CD4-positive, alpha-beta T cell (primary cell): ENCODE measurements at regions of chr1 and their contacts with region 1.

Region 1: GRCh38 chr1:234326497-234327366 is 46.5 kb upstream of the COA6 start:
- DNase-seq: peak; percentile 45 to 86 (median 71)
- ATAC-seq: peak; percentile 91
- H3K4me3 ChIP-seq: peak overlapping the region; percentile 73
- H3K4me3 Mint-ChIP-seq: peak overlapping the region; percentile 93
- H3K27ac ChIP-seq: peak overlapping the region; percentile 24 to 72
- H3K27ac Mint-ChIP-seq: peak overlapping the region; percentile 85
- H3K4me1 ChIP-seq: peaks cover 12% of the 10 kb centered on the region
- H3K4me1 Mint-ChIP-seq: peaks cover 25% of the 10 kb centered on the region
- H3K27me3 ChIP-seq: peaks cover 0 to 6% of the 10 kb centered on the region in 2 experiments
- H3K27me3 Mint-ChIP-seq: peaks cover 14% of the 10 kb centered on the region
- CTCF ChIP-seq: peak; percentile 87

Region 2: GRCh38 chr1:234114648-234115307 is 212.0 kb before region 1 on chr1:
- CTCF ChIA-PET with region 1: interaction called, 7 read pairs
- POLR2A ChIA-PET with region 1: no interaction called
- intact Hi-C with region 1: loop called (anchors 2 kb)
- DNase-seq: peak in 8 of 14 experiments; percentile 3 to 69 (median 20)
- ATAC-seq: no peak
- H3K4me3 ChIP-seq: no peak overlapping the region
- H3K4me3 Mint-ChIP-seq: peak overlapping the region; percentile 61
- H3K27ac ChIP-seq: no peak overlapping the region
- H3K27ac Mint-ChIP-seq: no peak overlapping the region
- H3K4me1 ChIP-seq: peaks cover 4% of the 10 kb centered on the region
- H3K4me1 Mint-ChIP-seq: peaks cover 7% of the 10 kb centered on the region
- H3K27me3 ChIP-seq: peaks cover 3 to 10% of the 10 kb centered on the region in 2 experiments
- H3K27me3 Mint-ChIP-seq: peaks cover 24% of the 10 kb centered on the region
- CTCF ChIP-seq: peak; percentile 88

Region 3: DNA sequence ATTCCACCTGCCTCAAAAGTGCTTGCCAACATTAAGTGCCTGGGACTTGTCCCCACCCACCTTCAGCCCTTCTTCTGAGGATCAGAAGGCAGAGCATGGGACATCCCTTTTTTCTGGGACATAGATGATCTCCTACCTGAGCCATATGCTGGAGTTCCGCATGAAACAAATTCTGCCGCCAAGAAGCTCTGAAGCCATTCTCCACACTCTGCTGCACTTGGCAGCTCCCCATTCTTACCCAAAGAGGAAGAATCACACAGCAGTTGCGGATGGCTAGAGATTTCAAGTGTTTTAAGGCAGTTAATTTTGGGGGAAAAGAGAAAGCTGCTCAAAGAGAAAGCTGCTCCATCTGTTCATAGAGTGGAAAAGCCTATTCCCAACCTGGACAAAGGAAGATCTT is 150.7 kb before region 1 on chr1:
- CTCF ChIA-PET with region 1: no interaction called
- POLR2A ChIA-PET with region 1: no interaction called
- intact Hi-C with region 1: no loop called
- DNase-seq: no peak
- ATAC-seq: no peak
- H3K4me3 ChIP-seq: no peak overlapping the region
- H3K4me3 Mint-ChIP-seq: no peak overlapping the region
- H3K27ac ChIP-seq: no peak overlapping the region
- H3K27ac Mint-ChIP-seq: no peak overlapping the region
- H3K4me1 ChIP-seq: peaks cover 5% of the 10 kb centered on the region
- H3K4me1 Mint-ChIP-seq: peaks cover 5% of the 10 kb centered on the region
- H3K27me3 ChIP-seq: no peaks in the 10 kb centered on the region
- H3K27me3 Mint-ChIP-seq: peaks cover 21% of the 10 kb centered on the region
- CTCF ChIP-seq: no peak

Region 4: GRCh38 chr1:234212764-234213657 is 113.7 kb before region 1 on chr1:
- CTCF ChIA-PET with region 1: interaction called, 43 read pairs
- POLR2A ChIA-PET with region 1: no interaction called
- intact Hi-C with region 1: loop called (anchors 1 to 5 kb)
- DNase-seq: peak in 6 of 14 experiments; percentile 12 to 72 (median 37)
- ATAC-seq: peak; percentile 68
- H3K4me3 ChIP-seq: no peak overlapping the region
- H3K4me3 Mint-ChIP-seq: peak overlapping the region; percentile 76
- H3K27ac ChIP-seq: no peak overlapping the region
- H3K27ac Mint-ChIP-seq: peak overlapping the region; percentile 6
- H3K4me1 ChIP-seq: peaks cover 25% of the 10 kb centered on the region
- H3K4me1 Mint-ChIP-seq: peaks cover 20% of the 10 kb centered on the region
- H3K27me3 ChIP-seq: peaks cover 4 to 26% of the 10 kb centered on the region in 2 experiments
- H3K27me3 Mint-ChIP-seq: peaks cover 47% of the 10 kb centered on the region
- CTCF ChIP-seq: peak; percentile 64

Region 5: GRCh38 chr1:234315091-234315541 is 11.6 kb before region 1 on chr1:
- CTCF ChIA-PET with region 1: interaction called, 156 read pairs
- POLR2A ChIA-PET with region 1: interaction called, 9 read pairs
- intact Hi-C with region 1: loop called in 1 of 2 experiments (anchors 1 kb)
- DNase-seq: peak in 8 of 14 experiments; percentile 30 to 85 (median 42)
- ATAC-seq: peak; percentile 89
- H3K4me3 ChIP-seq: no peak overlapping the region
- H3K4me3 Mint-ChIP-seq: peak overlapping the region; percentile 5
- H3K27ac ChIP-seq: peak overlapping the region in 1 of 2 donors; percentile 93
- H3K27ac Mint-ChIP-seq: peak overlapping the region; percentile 92
- H3K4me1 ChIP-seq: peaks cover 60% of the 10 kb centered on the region
- H3K4me1 Mint-ChIP-seq: peaks cover 40% of the 10 kb centered on the region
- H3K27me3 ChIP-seq: no peaks in the 10 kb centered on the region
- H3K27me3 Mint-ChIP-seq: no peaks in the 10 kb centered on the region
- CTCF ChIP-seq: no peak

Region 6: DNA sequence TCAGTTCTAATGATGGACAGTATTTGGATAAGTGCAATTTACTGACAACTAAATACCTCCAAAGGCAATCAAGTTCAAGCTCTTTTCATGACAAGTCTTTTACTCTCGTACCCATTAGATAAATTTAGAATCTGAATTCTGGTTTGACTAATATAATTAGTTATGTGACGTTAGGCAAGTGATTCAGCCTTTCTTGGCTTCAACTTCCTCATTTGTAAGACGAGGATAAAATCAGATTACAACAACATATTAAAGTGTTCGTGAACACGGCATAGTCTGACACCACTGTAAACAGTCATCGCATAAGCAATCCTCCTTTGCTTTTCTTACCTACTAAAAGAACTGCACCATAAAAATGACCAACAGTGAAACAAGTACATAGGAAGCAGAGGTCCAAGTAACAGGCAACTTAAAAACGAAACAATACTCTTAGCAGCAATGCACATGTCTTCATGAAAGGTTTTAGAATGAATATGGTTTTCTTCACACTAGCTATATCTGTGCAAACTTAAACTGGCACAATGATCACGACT is 72.2 kb after region 1 on chr1:
- CTCF ChIA-PET with region 1: no interaction called
- POLR2A ChIA-PET with region 1: no interaction called
- intact Hi-C with region 1: no loop called
- DNase-seq: peak in 2 of 14 experiments; percentile 37 to 44
- ATAC-seq: peak; percentile 7
- H3K4me3 ChIP-seq: peak overlapping the region; percentile 29
- H3K4me3 Mint-ChIP-seq: peak overlapping the region; percentile 85
- H3K27ac ChIP-seq: peak overlapping the region in 1 of 2 donors; percentile 7
- H3K27ac Mint-ChIP-seq: peak overlapping the region; percentile 92
- H3K4me1 ChIP-seq: peaks cover 14% of the 10 kb centered on the region
- H3K4me1 Mint-ChIP-seq: peaks cover 66% of the 10 kb centered on the region
- H3K27me3 ChIP-seq: no peaks in the 10 kb centered on the region
- H3K27me3 Mint-ChIP-seq: no peaks in the 10 kb centered on the region
- CTCF ChIP-seq: no peak

Region 7: GRCh38 chr1:234409328-234409727 is 82.6 kb after region 1 on chr1:
- CTCF ChIA-PET with region 1: interaction called, 5 read pairs
- POLR2A ChIA-PET with region 1: interaction called, 5 read pairs
- intact Hi-C with region 1: loop called (anchors 1 kb)
- DNase-seq: peak in 7 of 14 experiments; percentile 8 to 84 (median 41)
- ATAC-seq: peak; percentile 57
- H3K4me3 ChIP-seq: peak overlapping the region; percentile 38
- H3K4me3 Mint-ChIP-seq: peak overlapping the region; percentile 67
- H3K27ac ChIP-seq: peak overlapping the region; percentile 77
- H3K27ac Mint-ChIP-seq: peak overlapping the region; percentile 91
- H3K4me1 ChIP-seq: peaks cover 18% of the 10 kb centered on the region
- H3K4me1 Mint-ChIP-seq: peaks cover 50% of the 10 kb centered on the region
- H3K27me3 ChIP-seq: no peaks in the 10 kb centered on the region
- H3K27me3 Mint-ChIP-seq: no peaks in the 10 kb centered on the region
- CTCF ChIP-seq: peak; percentile 78

Region 8: DNA sequence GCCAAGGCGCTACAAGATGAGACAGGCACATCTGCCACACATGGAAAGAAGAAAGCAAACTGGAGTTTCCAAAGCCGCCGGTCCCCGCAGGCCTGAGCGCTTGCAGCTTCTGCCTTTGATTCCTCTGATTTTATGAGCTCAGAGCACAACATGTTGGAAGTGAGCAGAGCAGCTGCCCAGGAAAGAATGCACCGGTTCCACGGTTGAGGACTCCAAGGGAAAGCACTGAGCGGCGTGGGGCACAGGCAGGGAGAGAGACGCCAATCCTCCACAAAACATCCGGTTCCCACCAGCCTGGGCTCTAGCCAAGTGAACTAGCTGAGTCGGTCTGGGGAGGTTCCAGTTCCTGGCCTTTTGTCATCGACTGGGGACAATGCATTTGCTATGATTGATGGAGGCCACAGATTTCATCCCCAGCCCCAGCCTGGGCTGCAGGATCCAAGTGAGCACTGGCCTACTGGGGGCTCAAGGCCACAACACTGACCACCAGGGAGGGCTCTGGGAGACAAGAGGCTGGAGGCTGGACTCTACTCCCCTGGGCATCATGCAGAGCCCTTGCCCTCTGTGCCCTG is 536.3 kb after region 1 on chr1:
- CTCF ChIA-PET with region 1: no interaction called
- POLR2A ChIA-PET with region 1: no interaction called
- intact Hi-C with region 1: no loop called
- DNase-seq: no peak
- ATAC-seq: no peak
- H3K4me3 ChIP-seq: no peak overlapping the region
- H3K4me3 Mint-ChIP-seq: no peak overlapping the region
- H3K27ac ChIP-seq: no peak overlapping the region
- H3K27ac Mint-ChIP-seq: no peak overlapping the region
- H3K4me1 ChIP-seq: peaks cover 14% of the 10 kb centered on the region
- H3K4me1 Mint-ChIP-seq: peaks cover 4% of the 10 kb centered on the region
- H3K27me3 ChIP-seq: no peaks in the 10 kb centered on the region
- H3K27me3 Mint-ChIP-seq: no peaks in the 10 kb centered on the region
- CTCF ChIP-seq: no peak

Region 9: GRCh38 chr1:235075188-235075926 is 748.6 kb after region 1 on chr1:
- CTCF ChIA-PET with region 1: no interaction called
- POLR2A ChIA-PET with region 1: no interaction called
- intact Hi-C with region 1: no loop called
- DNase-seq: peak in 11 of 14 experiments; percentile 10 to 80 (median 29)
- ATAC-seq: peak; percentile 68
- H3K4me3 ChIP-seq: peak overlapping the region; percentile 15
- H3K4me3 Mint-ChIP-seq: no peak overlapping the region
- H3K27ac ChIP-seq: no peak overlapping the region
- H3K27ac Mint-ChIP-seq: peak overlapping the region; percentile 73
- H3K4me1 ChIP-seq: peaks cover 38% of the 10 kb centered on the region
- H3K4me1 Mint-ChIP-seq: peaks cover 16% of the 10 kb centered on the region
- H3K27me3 ChIP-seq: no peaks in the 10 kb centered on the region
- H3K27me3 Mint-ChIP-seq: no peaks in the 10 kb centered on the region
- CTCF ChIP-seq: no peak